HepG2 (cell line): ENCODE measurements at regions of chr12 and their contacts with region 1.

Region 1: DNA sequence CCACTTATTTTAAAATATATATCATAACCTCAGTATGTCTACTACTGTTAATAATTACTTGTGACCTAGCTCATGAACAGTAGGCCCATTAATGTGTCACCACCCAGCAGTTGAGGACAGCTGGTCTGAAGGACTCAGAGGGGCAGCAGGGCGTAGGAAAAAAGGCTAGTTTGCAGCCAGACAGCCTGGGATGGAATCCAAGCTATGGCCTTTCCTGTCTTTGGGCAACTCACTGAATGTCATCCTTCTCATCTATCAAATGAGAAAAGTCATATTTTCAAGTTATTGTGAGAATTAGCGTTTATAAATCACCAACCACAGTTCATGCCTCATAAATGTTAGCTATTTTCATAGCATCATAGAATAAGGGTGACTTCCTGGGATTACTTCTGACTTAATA is 12.3 kb downstream of the DENND5B start:
- DNase-seq: no peak
- ATAC-seq: peak; percentile 61
- H3K4me3 ChIP-seq: no peak overlapping the region
- H3K27ac ChIP-seq: no peak overlapping the region
- H3K4me1 ChIP-seq: peaks cover 35% of the 10 kb centered on the region
- H3K27me3 ChIP-seq: no peaks in the 10 kb centered on the region
- CTCF ChIP-seq: no peak
- EP300 ChIP-seq: no peak
- POLR2A ChIP-seq: no peak
- RAD21 ChIP-seq: no peak

Region 2: DNA sequence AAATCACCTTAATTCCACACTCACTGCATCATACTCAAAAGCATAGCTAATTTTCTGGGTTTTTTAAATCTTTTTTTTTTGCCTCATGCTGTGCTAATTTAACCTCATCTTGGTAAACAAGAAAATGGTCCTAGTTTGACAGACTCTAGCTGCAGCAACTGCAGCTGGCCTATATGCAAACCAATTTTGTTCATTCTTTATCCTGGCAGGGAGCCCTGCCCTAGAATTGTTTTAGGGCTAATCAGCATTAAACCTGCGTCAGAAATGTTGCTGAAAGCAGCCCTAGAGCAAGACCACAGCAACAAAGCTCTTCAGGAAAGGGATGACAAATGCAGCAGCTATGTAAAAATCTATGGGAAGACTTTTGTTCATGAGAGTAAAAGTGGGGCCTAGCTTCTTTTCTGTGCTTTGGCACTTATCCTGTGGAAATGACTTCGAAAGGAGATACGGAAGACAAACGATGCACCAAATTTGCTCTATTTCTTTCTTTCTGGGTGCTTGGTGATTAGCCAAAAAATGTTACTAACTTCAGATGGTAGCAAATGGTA is 59.9 kb before region 1 on chr12:
- CTCF ChIA-PET with region 1: no interaction called
- POLR2A ChIA-PET with region 1: no interaction called
- in situ Hi-C with region 1: no loop called
- intact Hi-C with region 1: loop called (anchors 5 kb)
- DNase-seq: peak; percentile 10
- ATAC-seq: no peak
- H3K4me3 ChIP-seq: no peak overlapping the region
- H3K27ac ChIP-seq: peak overlapping the region; percentile 8
- H3K4me1 ChIP-seq: peaks cover 26% of the 10 kb centered on the region
- H3K27me3 ChIP-seq: no peaks in the 10 kb centered on the region
- CTCF ChIP-seq: no peak
- EP300 ChIP-seq: no peak
- POLR2A ChIP-seq: no peak
- RAD21 ChIP-seq: no peak

Region 3: DNA sequence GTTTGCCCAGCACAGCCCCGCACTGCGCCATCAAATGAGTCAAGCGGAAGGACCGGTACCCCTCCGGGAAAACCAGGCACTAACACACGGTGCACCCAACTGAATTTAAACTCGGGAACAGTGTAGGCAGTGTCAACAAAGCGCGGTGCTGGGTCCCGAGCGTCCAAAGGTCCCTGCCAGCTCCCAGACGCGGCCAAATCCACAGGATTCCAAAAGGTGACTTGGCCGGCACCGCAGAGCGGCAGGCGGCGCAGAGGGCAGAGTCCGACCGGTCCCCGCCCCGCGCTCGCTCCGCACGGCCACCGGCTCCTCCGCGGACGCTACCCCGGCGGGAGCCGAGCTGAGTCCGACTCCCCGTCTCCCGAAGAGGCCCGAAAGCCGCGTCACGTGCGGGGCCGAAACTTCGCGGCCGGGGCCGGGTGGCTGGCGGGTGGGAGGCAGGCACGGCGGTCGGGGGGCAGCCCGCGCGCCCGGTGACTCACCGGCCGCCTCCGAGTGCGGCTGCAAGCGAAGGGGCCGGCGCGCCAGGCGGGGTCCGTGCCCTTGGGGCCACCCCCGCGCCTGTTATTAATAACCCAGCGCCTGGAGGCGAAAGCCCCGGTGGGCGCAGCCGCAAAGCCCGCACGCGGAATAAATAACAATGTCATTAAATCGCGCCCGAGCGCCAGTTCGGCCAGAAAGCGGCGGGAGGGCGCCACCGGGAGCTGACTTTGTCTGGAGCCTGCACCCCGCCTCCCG is 11.4 kb after region 1 on chr12:
- CTCF ChIA-PET with region 1: no interaction called
- POLR2A ChIA-PET with region 1: interaction called, 16 read pairs
- in situ Hi-C with region 1: no loop called
- intact Hi-C with region 1: no loop called
- DNase-seq: peak; percentile 89
- ATAC-seq: peak; percentile 89
- H3K4me3 ChIP-seq: peak overlapping the region; percentile 86 to 95 (median 89)
- H3K27ac ChIP-seq: peak overlapping the region; percentile 100
- H3K4me1 ChIP-seq: peaks cover 41% of the 10 kb centered on the region
- H3K27me3 ChIP-seq: no peaks in the 10 kb centered on the region
- CTCF ChIP-seq: no peak
- EP300 ChIP-seq: peak; percentile 55 to 65; a peak in 2 of 4 replicates
- POLR2A ChIP-seq: peak; percentile 77 to 85
- RAD21 ChIP-seq: peak; percentile 66

Region 4: GRCh38 chr12:31859232-31859977 is 280.8 kb after region 1 on chr12:
- CTCF ChIA-PET with region 1: no interaction called
- POLR2A ChIA-PET with region 1: no interaction called
- in situ Hi-C with region 1: no loop called
- intact Hi-C with region 1: no loop called
- DNase-seq: no peak
- ATAC-seq: no peak
- H3K4me3 ChIP-seq: no peak overlapping the region
- H3K27ac ChIP-seq: no peak overlapping the region
- H3K4me1 ChIP-seq: peaks cover 17% of the 10 kb centered on the region
- H3K27me3 ChIP-seq: no peaks in the 10 kb centered on the region
- CTCF ChIP-seq: no peak
- EP300 ChIP-seq: no peak
- POLR2A ChIP-seq: no peak
- RAD21 ChIP-seq: no peak